Activated CD4-positive, alpha-beta T cell treated with anti-CD3 and anti-CD28 coated beads, Interleukin-2, amount 10 ng/mL, durations not matched to agents 7 days and 5 days (primary cell): ENCODE measurements at regions of chr11 and their contacts with region 1.

Region 1: DNA sequence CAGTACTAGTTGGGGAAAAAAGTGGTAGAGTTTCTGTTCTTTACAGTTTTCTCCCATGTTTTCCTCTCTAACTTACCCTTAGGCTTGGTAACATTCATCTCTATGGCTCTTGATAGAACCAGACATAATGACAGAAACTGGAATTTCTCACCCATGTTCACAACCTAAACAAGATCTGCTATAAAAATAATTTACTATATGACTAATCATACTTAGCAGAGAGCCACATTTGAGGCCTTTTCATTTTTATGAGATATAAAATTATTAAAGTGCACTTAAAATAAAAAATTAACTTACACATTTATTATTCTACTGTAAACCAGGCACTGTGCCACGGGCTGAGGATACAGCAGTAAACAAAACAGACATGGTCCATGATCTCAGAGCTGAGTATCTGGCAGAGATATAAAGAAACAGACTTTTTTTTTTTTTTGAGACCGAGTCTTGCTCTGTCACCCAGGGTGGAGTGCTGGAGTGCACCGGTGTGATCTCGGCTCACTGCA is 98.1 kb downstream of the GAB2 start:
- DNase-seq: no peak
- H3K4me3 Mint-ChIP-seq: no peak overlapping the region
- H3K27ac Mint-ChIP-seq: no peak overlapping the region
- H3K4me1 Mint-ChIP-seq: peaks cover 32% of the 10 kb centered on the region
- H3K27me3 Mint-ChIP-seq: no peaks in the 10 kb centered on the region

Region 2: GRCh38 chr11:78268591-78269410 is 50.7 kb before region 1 on chr11:
- CTCF ChIA-PET with region 1: no interaction called
- POLR2A ChIA-PET with region 1: interaction called, 15 read pairs
- DNase-seq: no peak
- H3K4me3 Mint-ChIP-seq: no peak overlapping the region
- H3K27ac Mint-ChIP-seq: no peak overlapping the region
- H3K4me1 Mint-ChIP-seq: peaks cover 4% of the 10 kb centered on the region
- H3K27me3 Mint-ChIP-seq: no peaks in the 10 kb centered on the region